ENCODE measurements at regions of chr12 and their contacts with region 1.

Region 1: GRCh38 chr12:47276621-47277309 is 197.0 kb upstream of the AMIGO2 start:
- DNase-seq: peak; percentile 63
- H3K4me3 Mint-ChIP-seq: peak overlapping the region; percentile 46
- H3K27ac Mint-ChIP-seq: peak overlapping the region; percentile 88
- H3K4me1 Mint-ChIP-seq: peaks cover 66% of the 10 kb centered on the region
- H3K27me3 Mint-ChIP-seq: no peaks in the 10 kb centered on the region

Region 2: DNA sequence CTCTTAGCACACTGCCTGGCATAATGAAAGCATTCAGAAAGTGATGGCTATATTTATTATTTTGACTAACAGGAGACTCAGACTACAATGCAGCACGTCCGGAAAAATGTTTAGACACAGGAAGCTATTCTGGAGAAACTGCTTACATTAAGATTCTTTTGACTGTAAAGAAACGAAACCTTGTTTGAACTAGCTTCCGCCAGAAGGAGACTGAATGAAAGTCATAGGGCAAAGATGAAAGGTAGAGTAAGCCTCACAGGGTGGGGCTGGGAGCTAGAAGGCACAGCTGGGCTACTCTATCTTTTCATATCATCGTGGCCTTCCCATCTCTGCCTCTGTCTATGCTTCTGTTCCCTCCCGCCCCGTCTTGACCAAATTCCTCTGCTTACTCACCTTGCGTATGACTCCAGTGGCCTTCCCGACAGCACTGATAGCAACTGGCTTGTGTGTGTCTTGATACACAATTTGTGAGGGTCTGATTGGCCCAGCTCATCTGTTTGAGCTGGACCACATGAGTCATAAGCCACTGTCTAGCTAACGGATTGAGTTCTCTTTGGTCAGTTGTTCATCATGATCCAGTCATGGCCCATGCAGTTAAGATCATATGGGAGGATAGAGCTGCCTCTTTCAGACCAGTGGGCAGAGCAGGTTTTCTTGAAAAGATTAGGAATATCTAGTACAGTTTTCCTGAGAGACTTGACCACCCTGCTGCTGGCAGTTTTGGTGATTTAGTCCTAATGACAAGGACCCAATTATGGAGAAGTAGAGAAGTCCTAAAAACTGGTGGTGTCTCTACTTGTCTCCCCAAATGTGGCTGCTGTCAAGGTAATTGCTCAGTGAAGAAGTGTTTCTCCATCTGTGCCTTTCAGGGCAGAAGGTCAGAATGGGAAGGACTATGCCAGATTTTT is 752.6 kb before region 1 on chr12:
- intact Hi-C with region 1: loop called (anchors 10 kb)
- DNase-seq: peak; percentile 48
- H3K4me3 Mint-ChIP-seq: peak overlapping the region; percentile 81
- H3K27ac Mint-ChIP-seq: peak overlapping the region; percentile 99
- H3K4me1 Mint-ChIP-seq: peaks cover 52% of the 10 kb centered on the region
- H3K27me3 Mint-ChIP-seq: no peaks in the 10 kb centered on the region

Region 3: DNA sequence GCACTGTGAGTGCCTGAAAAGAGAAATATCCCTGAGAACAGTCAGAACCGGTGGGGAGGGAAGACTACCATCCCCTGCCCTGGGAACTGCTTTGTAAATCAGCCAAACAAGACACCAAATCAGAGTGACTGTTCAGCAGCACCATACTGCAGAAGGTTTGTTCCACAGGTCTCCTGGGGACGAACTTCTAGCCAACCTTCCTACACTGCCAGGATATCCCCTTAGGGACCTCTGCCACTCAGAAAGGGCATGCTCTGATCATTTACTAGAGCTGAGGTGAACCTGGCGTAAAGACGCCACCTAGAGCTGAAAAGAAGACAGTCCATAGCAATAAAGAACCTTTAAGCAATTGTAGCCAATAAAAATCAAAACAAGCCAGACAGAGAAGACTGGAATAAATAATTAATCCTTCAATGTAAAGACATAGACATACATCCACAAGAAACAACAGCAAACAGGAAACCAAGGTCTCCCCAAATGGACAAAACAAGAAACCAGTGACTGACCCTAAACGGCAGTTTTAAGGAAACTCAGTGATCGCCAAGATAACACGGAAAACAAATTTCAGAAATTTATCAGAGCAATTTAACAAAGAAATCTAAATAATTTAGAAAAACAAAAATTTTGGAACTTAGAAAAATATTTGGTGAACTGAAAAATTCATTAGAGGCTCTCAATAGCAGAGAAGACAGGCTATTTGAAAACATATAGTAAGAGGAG is 31.1 kb after region 1 on chr12:
- intact Hi-C with region 1: loop called (anchors 1 kb)
- DNase-seq: peak; percentile 43
- H3K4me3 Mint-ChIP-seq: peak overlapping the region; percentile 91
- H3K27ac Mint-ChIP-seq: peak overlapping the region; percentile 87
- H3K4me1 Mint-ChIP-seq: peaks cover 69% of the 10 kb centered on the region
- H3K27me3 Mint-ChIP-seq: no peaks in the 10 kb centered on the region

Region 4: GRCh38 chr12:47318963-47319362 is 42.2 kb after region 1 on chr12:
- intact Hi-C with region 1: no loop called
- DNase-seq: peak; percentile 19
- H3K4me3 Mint-ChIP-seq: no peak overlapping the region
- H3K27ac Mint-ChIP-seq: peak overlapping the region; percentile 40
- H3K4me1 Mint-ChIP-seq: peaks cover 40% of the 10 kb centered on the region
- H3K27me3 Mint-ChIP-seq: no peaks in the 10 kb centered on the region